ENCODE measurements at regions of chr2 and their contacts with region 1.

Region 1: GRCh38 chr2:34241905-34242762 is 643.0 kb upstream of the FAM98A start:
- DNase-seq: no peak
- ATAC-seq: no peak
- H3K4me3 ChIP-seq: no peak overlapping the region
- H3K27ac ChIP-seq: no peak overlapping the region
- H3K4me1 ChIP-seq: no peaks in the 10 kb centered on the region
- H3K27me3 ChIP-seq: no peaks in the 10 kb centered on the region
- CTCF ChIP-seq: no peak

Region 2: DNA sequence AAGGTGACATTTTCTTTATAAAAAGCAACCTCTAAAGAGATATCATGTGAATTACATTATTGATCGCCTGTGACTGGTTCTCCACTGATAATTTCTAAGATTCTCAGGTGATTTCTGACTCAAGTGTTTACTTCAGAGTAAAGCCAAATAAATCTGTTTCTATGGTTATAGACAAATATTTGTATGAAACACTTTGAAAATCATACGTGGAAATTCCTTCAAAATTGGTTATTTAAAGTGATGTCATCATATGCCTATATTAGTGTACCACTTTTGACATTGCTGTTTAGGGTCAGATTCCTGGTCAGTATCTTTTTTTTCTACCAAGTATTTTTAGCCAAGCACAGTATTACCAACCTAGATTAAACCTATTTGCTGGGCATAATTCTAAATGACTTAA is 238.2 kb after region 1 on chr2:
- intact Hi-C with region 1: loop called in 1 of 10 experiments (anchors 5 kb)
- DNase-seq: no peak
- ATAC-seq: no peak
- H3K4me3 ChIP-seq: no peak overlapping the region
- H3K27ac ChIP-seq: no peak overlapping the region
- H3K4me1 ChIP-seq: no peaks in the 10 kb centered on the region
- H3K27me3 ChIP-seq: no peaks in the 10 kb centered on the region
- CTCF ChIP-seq: no peak

Measured in heart right ventricle (tissue), 16 donors.